Activated naive CD4-positive, alpha-beta T cell treated with anti-CD3 and anti-CD28 coated beads, Interleukin-2, amount 10 ng/mL, durations not matched to agents 7 days and 5 days (primary cell): ENCODE measurements at regions of chr21 and their contacts with region 1.

Region 1: GRCh38 chr21:38355992-38356797 is 99.4 kb downstream of the KCNJ15 start:
- DNase-seq: peak; percentile 80
- H3K4me3 Mint-ChIP-seq: no peak overlapping the region
- H3K27ac Mint-ChIP-seq: no peak overlapping the region
- H3K4me1 Mint-ChIP-seq: peaks cover 12% of the 10 kb centered on the region
- H3K27me3 Mint-ChIP-seq: peaks cover 16% of the 10 kb centered on the region

Region 2: DNA sequence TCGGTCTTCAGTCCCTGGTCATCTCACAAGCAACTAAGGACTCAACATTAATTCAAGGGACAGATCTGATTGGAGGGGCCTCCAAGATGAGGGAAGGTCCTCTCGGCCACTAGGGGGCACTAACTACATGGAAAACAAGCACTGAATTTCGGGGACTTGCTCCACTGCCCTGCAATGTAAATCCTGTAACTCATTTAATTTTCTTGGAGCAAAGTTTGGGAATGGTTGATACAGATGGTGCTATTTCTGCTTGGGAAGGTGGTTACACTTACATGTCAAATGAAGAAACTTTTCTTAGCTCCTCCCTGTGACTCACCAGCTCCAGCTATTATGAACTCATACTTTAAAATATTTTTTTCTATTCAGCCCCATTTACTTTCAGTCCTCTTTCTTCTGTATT is 196.8 kb before region 1 on chr21:
- CTCF ChIA-PET with region 1: interaction called, 98 read pairs
- DNase-seq: peak; percentile 65
- H3K4me3 Mint-ChIP-seq: no peak overlapping the region
- H3K27ac Mint-ChIP-seq: no peak overlapping the region
- H3K4me1 Mint-ChIP-seq: no peaks in the 10 kb centered on the region
- H3K27me3 Mint-ChIP-seq: peaks cover 21% of the 10 kb centered on the region

Region 3: GRCh38 chr21:38219049-38219628 is 137.1 kb before region 1 on chr21:
- CTCF ChIA-PET with region 1: interaction called, 193 read pairs
- DNase-seq: peak; percentile 76
- H3K4me3 Mint-ChIP-seq: no peak overlapping the region
- H3K27ac Mint-ChIP-seq: no peak overlapping the region
- H3K4me1 Mint-ChIP-seq: peaks cover 3% of the 10 kb centered on the region
- H3K27me3 Mint-ChIP-seq: peaks cover 4% of the 10 kb centered on the region

Region 4: DNA sequence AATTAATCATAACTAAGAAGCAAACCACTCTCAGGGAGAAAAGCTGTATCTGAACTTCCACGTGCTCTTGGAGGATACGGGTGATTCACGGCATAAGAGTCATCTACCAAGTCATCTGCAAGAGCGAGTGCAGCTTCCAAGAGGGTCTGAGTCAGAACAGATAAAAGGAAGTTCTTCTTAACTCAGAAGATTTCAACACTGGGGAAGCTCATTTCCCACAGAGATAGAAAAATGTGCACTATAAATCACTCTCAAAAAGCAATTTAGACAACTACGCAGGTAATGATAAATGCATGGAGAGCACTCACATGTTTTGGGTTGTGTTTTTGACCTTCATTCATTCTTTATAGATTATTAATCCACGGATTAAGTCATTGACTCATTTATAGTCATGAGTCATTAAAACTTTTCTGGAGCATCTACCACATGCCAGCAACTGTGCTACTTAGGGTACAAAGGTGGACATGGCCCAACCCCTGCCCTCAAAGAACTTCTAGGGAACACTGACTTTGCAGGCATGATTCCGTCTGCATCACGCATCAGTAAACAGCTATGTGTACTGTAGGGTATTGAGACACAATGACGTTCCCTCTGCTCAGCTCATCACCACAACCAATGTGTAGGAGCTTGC is 78.6 kb before region 1 on chr21:
- CTCF ChIA-PET with region 1: interaction called, 11 read pairs
- DNase-seq: no peak
- H3K4me3 Mint-ChIP-seq: no peak overlapping the region
- H3K27ac Mint-ChIP-seq: no peak overlapping the region
- H3K4me1 Mint-ChIP-seq: peaks cover 2% of the 10 kb centered on the region
- H3K27me3 Mint-ChIP-seq: no peaks in the 10 kb centered on the region

Region 5: GRCh38 chr21:38300141-38300578 is 56.0 kb before region 1 on chr21:
- CTCF ChIA-PET with region 1: interaction called, 18 read pairs
- DNase-seq: peak; percentile 36
- H3K4me3 Mint-ChIP-seq: peak overlapping the region; percentile 53
- H3K27ac Mint-ChIP-seq: peak overlapping the region; percentile 88
- H3K4me1 Mint-ChIP-seq: peaks cover 49% of the 10 kb centered on the region
- H3K27me3 Mint-ChIP-seq: no peaks in the 10 kb centered on the region